GM23248 (cell line): ENCODE measurements at regions of chr1 and their contacts with region 1.

Region 1: DNA sequence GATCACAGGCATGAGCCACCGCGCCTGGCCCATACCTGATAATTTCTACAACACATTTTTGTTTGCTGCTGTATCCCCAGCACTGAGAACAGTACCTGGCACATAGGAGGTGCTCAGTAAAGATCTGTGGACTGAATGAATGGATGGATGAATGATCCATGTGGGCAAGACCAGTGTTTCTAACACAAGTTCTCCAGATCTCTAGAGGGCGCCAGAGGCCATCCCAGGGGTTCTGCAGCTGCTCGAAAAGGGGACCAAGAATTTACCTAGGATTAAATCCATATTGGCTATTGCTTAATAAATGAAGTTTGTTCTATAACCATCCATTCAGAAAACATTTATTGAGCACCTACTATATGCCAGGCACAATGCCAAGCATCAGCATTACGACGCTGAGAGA is 167.7 kb downstream of the ACTL8 start:
- DNase-seq: peak; percentile 62
- H3K4me3 ChIP-seq: no peak overlapping the region
- H3K27ac ChIP-seq: no peak overlapping the region
- H3K4me1 ChIP-seq: no peaks in the 10 kb centered on the region
- H3K27me3 ChIP-seq: peaks cover 7% of the 10 kb centered on the region; the same call in 1 of the 2 replicates

Region 2: GRCh38 chr1:17494114-17494729 is 428.6 kb before region 1 on chr1:
- in situ Hi-C with region 1: loop called (anchors 25 kb)
- DNase-seq: peak; percentile 84
- H3K4me3 ChIP-seq: no peak overlapping the region
- H3K27ac ChIP-seq: no peak overlapping the region
- H3K4me1 ChIP-seq: no peaks in the 10 kb centered on the region
- H3K27me3 ChIP-seq: no peaks in the 10 kb centered on the region